Activated CD4-positive, alpha-beta memory T cell treated with anti-CD3 and anti-CD28 coated beads, Interleukin-2, amount 10 ng/mL, durations not matched to agents 7 days and 5 days (primary cell): ENCODE measurements at regions of chr16 and their contacts with region 1.

Region 1: DNA sequence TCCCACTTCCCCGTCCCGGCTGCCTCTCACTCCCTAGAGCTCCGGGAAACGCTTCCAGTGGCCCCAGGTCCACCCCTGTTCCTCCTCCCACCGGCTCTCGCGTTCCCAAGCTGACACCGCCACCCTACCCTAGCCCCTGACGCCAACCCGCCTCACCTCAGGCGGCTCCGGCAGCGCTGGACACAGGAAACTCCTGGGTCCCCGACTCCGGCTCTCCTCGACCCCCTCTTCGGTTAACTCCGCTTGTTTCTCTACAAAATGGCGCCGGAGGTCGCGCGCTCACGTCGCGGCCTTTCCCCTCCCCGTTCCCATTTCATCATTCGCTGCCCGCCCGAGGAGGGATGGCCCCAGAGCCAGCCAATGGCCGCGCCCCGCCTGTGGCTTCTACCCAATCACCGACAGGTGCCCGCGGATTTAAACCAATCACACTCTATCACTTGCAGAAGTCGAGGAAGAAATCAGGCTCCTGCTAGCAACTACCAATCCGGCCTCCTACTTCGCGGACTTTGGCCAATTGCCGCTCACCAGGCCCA is at the start of gene CNOT1:
- DNase-seq: peak; percentile 99
- H3K4me3 Mint-ChIP-seq: peak within 1 kb of the TSS; percentile 100
- H3K27ac Mint-ChIP-seq: peak within 1 kb of the TSS; percentile 100
- H3K4me1 Mint-ChIP-seq: peaks cover 32% of the 10 kb centered on the region
- H3K27me3 Mint-ChIP-seq: no peaks in the 10 kb centered on the region
- total RNA-seq, gene CNOT1: 226 to 236 TPM

Region 2: GRCh38 chr16:58515125-58515870 is 114.3 kb before region 1 on chr16 and contains the start of gene SETD6:
- CTCF ChIA-PET with region 1: no interaction called
- POLR2A ChIA-PET with region 1: interaction called, 11 read pairs
- DNase-seq: peak; percentile 78
- H3K4me3 Mint-ChIP-seq: peak within 1 kb of the TSS; percentile 80
- H3K27ac Mint-ChIP-seq: peak within 1 kb of the TSS; percentile 33
- H3K4me1 Mint-ChIP-seq: peaks cover 46% of the 10 kb centered on the region
- H3K27me3 Mint-ChIP-seq: no peaks in the 10 kb centered on the region
- total RNA-seq, gene SETD6: 8.9 to 9.2 TPM

Region 3: GRCh38 chr16:58605562-58605961 is 24.1 kb before region 1 on chr16:
- CTCF ChIA-PET with region 1: no interaction called
- POLR2A ChIA-PET with region 1: interaction called, 16 read pairs
- DNase-seq: no peak
- H3K4me3 Mint-ChIP-seq: no peak overlapping the region
- H3K27ac Mint-ChIP-seq: no peak overlapping the region
- H3K4me1 Mint-ChIP-seq: peaks cover 27% of the 10 kb centered on the region
- H3K27me3 Mint-ChIP-seq: no peaks in the 10 kb centered on the region

Region 4: DNA sequence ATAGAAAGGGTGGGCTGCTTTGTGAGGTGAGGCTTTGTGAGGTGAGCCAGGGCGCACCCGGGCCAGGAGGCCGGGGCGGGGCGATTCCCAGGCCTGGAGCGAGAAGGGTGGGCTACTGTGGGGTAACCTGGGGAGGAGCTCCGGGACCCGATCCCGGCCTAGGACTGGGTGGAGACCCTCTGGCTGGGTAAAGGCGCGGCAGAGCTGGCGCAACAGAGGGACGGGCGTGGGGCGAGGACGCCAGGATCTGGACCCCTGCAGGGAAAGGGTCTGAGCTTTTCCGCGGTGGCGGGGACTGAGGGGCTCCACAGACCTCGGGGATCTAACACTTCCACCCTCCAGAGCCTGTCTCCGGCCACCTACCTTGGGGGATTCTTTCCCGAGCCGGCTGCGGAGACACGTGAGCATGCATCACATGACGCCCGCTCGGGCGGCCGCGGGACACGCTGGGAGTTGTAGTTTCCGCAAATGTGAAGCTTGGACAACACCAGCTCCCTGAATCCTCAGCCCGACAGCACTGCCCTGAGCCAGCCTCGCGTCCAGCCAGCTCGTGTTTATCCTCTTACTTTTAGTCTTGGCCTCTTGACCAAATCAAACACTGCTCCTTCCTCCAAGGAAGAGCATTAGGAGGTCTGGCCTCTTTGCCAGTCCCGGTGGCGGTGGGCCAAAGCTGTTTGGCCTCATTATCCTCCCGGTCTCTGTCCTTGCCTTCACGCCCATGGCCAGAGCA is 54.9 kb after region 1 on chr16 and contains the start of gene SLC38A7:
- CTCF ChIA-PET with region 1: no interaction called
- POLR2A ChIA-PET with region 1: interaction called, 16 read pairs
- DNase-seq: peak; percentile 80
- H3K4me3 Mint-ChIP-seq: peak within 1 kb of the TSS; percentile 90
- H3K27ac Mint-ChIP-seq: peak within 1 kb of the TSS; percentile 69
- H3K4me1 Mint-ChIP-seq: peaks cover 20% of the 10 kb centered on the region
- H3K27me3 Mint-ChIP-seq: peaks cover 4% of the 10 kb centered on the region
- total RNA-seq, gene SLC38A7: 10.5 to 11.4 TPM

Region 5: DNA sequence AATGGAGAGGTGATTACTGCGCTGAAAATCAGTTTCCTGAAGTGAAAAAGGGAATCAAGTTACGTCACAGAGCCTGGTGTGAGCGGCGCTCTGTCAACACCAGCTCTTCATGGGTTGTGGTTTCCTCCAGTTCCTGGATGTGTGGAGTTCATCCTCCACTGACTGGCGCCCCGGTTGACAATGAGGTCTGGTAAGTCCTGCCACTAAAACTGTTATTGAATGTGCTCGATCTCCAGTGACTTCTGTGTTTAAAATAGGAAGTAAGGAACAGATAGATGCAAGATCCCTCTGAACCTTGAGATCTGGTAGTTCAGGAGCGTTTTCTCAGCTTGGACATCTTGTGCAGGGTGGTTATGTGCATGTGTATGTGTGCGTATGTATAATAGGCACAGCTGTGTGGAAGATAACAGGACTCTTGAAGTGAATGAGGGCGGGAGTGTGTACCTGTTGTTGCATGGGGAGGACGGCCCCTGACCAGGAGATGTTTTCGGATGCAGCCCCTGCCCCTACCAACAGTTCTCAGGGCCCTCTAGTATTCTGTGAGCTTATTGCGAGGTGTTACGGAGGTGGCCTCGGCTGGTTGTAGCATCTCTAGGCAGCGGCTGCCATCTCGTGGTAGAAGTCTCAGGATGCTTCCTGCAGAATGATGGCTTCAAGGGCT is 126.5 kb after region 1 on chr16:
- CTCF ChIA-PET with region 1: interaction called, 16 read pairs
- POLR2A ChIA-PET with region 1: no interaction called
- DNase-seq: peak; percentile 83
- H3K4me3 Mint-ChIP-seq: peak overlapping the region; percentile 43
- H3K27ac Mint-ChIP-seq: peak overlapping the region; percentile 16
- H3K4me1 Mint-ChIP-seq: peaks cover 10% of the 10 kb centered on the region
- H3K27me3 Mint-ChIP-seq: no peaks in the 10 kb centered on the region